IMR-90 (cell line): ENCODE measurements at regions of chr6 and their contacts with region 1.

Region 1: GRCh38 chr6:54267798-54268197 is 40.4 kb upstream of the TINAG start:
- DNase-seq: peak; percentile 60
- ATAC-seq: peak; percentile 73
- H3K4me3 ChIP-seq: no peak overlapping the region
- H3K27ac ChIP-seq: no peak overlapping the region
- H3K4me1 ChIP-seq: no peaks in the 10 kb centered on the region
- H3K27me3 ChIP-seq: no peaks in the 10 kb centered on the region
- CTCF ChIP-seq: peak; percentile 54
- POLR2A ChIP-seq: no peak
- RAD21 ChIP-seq: peak; percentile 50

Region 2: GRCh38 chr6:54473328-54473727 is 205.5 kb after region 1 on chr6:
- CTCF ChIA-PET with region 1: no interaction called
- POLR2A ChIA-PET with region 1: no interaction called
- dilution Hi-C with region 1: no loop called
- in situ Hi-C with region 1: no loop called
- intact Hi-C with region 1: no loop called
- DNase-seq: no peak
- ATAC-seq: no peak
- H3K4me3 ChIP-seq: no peak overlapping the region
- H3K27ac ChIP-seq: no peak overlapping the region
- H3K4me1 ChIP-seq: no peaks in the 10 kb centered on the region
- H3K27me3 ChIP-seq: no peaks in the 10 kb centered on the region
- CTCF ChIP-seq: no peak
- POLR2A ChIP-seq: no peak
- RAD21 ChIP-seq: no peak

Region 3: DNA sequence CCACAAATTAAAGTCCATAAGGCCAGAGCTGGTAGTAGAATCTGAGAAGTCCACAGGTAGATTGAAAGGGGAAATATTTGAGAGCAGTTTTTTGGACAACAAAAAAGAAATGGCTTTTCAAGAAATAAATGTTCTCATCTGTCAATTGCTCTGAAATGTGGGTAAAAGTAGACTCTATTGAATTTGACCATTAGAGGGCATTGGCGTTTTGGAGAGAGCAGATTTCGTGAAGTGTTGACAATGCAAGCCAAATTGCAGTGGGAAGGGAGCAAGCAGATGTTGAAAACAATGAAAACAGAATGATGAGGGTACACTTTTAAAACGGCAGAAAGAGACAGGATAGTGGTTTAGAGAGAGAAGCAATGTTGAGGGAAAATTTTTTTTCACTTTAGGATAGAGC is 429.6 kb after region 1 on chr6:
- CTCF ChIA-PET with region 1: no interaction called
- POLR2A ChIA-PET with region 1: no interaction called
- dilution Hi-C with region 1: no loop called
- in situ Hi-C with region 1: no loop called
- intact Hi-C with region 1: loop called (anchors 10 kb)
- DNase-seq: peak; percentile 16
- ATAC-seq: peak; percentile 64; the same call in 1 of the 2 replicates
- H3K4me3 ChIP-seq: no peak overlapping the region
- H3K27ac ChIP-seq: no peak overlapping the region
- H3K4me1 ChIP-seq: no peaks in the 10 kb centered on the region
- H3K27me3 ChIP-seq: no peaks in the 10 kb centered on the region
- CTCF ChIP-seq: peak; percentile 43
- POLR2A ChIP-seq: no peak
- RAD21 ChIP-seq: peak; percentile 47